Colonic mucosa (tissue), 4 donors: ENCODE measurements at regions of chr18 and their contacts with region 1.

Region 1: DNA sequence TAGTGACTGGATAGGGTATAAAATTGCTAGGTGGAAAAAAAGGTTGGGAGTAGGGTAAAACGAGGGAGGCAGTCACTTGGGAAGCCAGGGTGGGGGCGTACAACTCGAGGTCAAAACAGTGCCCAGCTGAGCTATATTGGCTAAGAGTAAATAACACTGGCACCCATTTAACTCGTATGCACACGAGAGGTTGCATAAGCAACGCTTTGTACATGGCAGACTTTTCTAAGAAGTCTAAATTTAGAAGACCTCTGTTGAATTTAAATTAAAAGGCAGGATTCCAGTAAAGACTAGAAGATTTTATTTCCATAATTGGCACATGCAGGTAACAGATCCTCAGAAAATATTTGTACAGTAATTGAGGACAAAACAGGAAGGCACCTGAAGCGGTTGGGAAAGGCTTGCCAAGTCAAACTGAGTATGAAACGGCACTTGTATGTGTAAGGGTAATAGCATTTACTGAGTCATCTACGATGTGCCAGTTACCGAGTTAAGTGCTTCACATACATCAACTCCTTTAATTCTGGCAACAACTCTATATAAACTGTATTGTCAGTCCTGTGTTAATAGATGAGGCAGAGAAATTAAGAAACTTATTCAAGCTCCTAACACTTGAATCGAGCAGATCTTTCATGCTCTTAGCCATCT is 1.4 kb upstream of the MALT1 start:
- DNase-seq: peak; percentile 46
- H3K4me3 ChIP-seq: no peak overlapping the region
- H3K27ac ChIP-seq: peak overlapping the region; percentile 97
- H3K4me1 ChIP-seq: peaks cover 5% of the 10 kb centered on the region
- H3K27me3 ChIP-seq: no peaks in the 10 kb centered on the region
- CTCF ChIP-seq: no peak

Region 2: DNA sequence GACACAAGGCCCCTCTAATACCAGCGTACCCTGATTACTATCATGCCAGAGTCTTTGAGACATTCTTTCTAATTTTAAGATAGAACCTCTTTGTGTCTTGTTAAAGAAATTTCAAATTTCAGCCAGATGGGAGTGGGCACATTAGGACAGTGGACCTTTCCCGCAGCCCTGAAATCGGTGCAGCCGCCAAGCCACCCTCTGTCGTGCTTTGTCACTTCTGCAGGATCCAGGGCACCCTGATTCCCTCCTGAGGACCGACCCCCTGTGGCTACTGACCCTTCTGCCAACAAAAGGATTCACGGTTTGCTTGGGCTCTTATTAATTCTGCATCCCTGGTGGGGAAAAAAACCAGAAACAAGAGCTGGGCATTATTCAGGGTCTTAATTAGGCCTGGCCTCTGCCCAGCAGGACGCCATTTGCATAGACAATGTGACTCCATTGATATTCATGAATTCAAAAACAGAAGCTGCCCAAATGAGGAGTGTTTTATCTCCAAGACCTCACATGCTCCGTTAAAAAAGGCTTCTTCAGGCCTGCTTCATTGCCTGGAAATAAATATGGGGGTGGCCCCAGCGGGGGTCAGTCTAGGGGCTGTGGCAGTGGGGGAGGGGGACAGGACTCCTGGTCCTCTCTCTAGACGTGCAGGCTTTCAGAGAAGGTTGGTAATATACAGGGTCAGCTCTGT is 157.8 kb before region 1 on chr18:
- intact Hi-C with region 1: no loop called
- DNase-seq: no peak
- H3K4me3 ChIP-seq: no peak overlapping the region
- H3K27ac ChIP-seq: no peak overlapping the region
- H3K4me1 ChIP-seq: no peaks in the 10 kb centered on the region
- H3K27me3 ChIP-seq: no peaks in the 10 kb centered on the region
- CTCF ChIP-seq: no peak

Region 3: DNA sequence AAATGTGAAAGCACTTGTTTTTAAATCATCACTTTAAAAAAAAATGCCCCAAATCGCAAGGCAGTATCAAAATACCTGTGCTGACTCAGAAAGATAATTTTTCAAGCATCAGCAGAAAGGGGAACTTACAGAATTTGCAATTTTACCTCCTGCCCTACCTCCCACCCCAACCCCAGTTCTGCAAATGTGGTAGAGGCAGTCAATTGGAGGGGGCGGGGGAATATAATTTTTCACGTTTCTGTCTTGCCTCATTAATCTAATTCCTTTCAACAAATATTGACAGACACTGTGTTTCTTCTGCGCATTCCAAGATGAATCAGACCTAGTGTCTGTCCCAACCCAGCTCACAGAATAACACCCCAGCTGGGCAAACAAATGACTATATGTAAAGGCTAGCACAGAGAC is 117.8 kb before region 1 on chr18:
- intact Hi-C with region 1: loop called (anchors 10 kb)
- DNase-seq: no peak
- H3K4me3 ChIP-seq: no peak overlapping the region
- H3K27ac ChIP-seq: no peak overlapping the region
- H3K4me1 ChIP-seq: peaks cover 7% of the 10 kb centered on the region
- H3K27me3 ChIP-seq: no peaks in the 10 kb centered on the region
- CTCF ChIP-seq: no peak